GM10248 (cell line): ENCODE measurements at regions of chr1 and their contacts with region 1.

Region 1: GRCh38 chr1:25080294-25081209 is 150.5 kb upstream of the RUNX3 start:
- DNase-seq: no peak
- CTCF ChIP-seq: no peak

Region 2: DNA sequence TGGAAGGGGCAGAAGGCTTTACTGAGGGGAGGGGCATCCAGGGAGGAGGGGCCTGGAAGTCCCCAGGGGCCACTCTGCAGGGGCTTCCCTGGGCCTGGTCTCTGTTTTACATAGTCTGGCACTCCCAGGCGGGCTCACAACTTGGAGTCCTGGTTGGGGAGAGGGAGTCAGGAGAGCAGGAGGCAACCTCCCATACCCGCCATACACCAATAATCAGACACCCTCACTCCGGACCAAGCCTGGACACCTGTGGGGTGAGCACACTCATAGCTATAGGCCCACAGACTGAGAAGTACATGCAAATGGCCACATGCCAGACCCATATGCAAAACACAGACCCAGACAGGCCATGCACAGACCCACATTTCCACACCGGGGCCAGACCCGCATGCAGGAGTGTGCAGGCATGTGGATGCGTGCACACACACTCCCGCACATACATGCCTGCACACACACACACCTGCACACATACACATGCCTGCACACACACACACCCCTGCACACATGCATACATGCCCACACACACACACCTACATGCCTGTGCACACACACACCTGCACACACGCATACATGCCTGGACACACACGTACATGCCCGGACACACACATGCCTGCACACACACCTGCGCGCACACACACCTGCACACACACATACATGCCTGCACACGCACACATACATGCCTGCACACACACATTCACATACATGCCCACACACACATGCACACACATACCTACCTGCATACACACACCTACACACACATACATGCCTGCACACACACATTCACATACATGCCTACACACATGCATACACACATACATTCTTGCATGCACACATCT is 61.0 kb before region 1 on chr1:
- CTCF ChIA-PET with region 1: no interaction called
- POLR2A ChIA-PET with region 1: no interaction called
- DNase-seq: peak; percentile 73
- CTCF ChIP-seq: no peak

Region 3: DNA sequence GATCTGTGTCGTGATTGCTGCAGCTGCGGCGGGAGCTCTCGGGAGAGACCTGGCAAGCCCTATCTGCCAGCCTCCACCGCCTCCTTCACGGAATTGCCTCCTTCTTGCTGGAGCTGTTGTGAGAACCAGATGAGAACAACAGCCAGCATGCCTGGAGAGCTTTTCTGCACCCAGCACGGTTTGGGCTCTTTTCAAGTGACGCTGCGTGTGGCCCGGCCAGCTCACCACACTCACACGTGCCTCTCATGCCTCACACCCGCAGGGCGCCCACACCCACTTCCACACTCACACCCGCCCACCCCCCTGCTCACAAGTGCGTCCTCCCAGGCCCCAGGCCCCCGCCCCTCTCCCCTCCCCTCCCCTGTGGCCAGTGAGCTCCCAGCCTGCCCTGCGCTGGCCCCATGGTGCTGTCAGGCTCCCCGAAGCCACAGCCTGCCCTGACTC is 14.7 kb before region 1 on chr1:
- CTCF ChIA-PET with region 1: interaction called, 12 read pairs
- POLR2A ChIA-PET with region 1: no interaction called
- DNase-seq: no peak
- CTCF ChIP-seq: no peak